ENCODE measurements at regions of chr10 and their contacts with region 1.

Region 1: GRCh38 chr10:57716886-57717285 is 550.8 kb downstream of the IPMK start:
- DNase-seq: peak; percentile 53
- H3K4me3 Mint-ChIP-seq: no peak overlapping the region
- H3K27ac Mint-ChIP-seq: no peak overlapping the region
- H3K4me1 Mint-ChIP-seq: no peaks in the 10 kb centered on the region
- H3K27me3 Mint-ChIP-seq: no peaks in the 10 kb centered on the region
- CTCF ChIP-seq: peak; percentile 42

Region 2: GRCh38 chr10:57706576-57707299 is 10.1 kb before region 1 on chr10:
- CTCF ChIA-PET with region 1: interaction called, 15 read pairs
- POLR2A ChIA-PET with region 1: interaction called, 3 read pairs
- intact Hi-C with region 1: no loop called
- DNase-seq: no peak
- H3K4me3 Mint-ChIP-seq: no peak overlapping the region
- H3K27ac Mint-ChIP-seq: no peak overlapping the region
- H3K4me1 Mint-ChIP-seq: peaks cover 9% of the 10 kb centered on the region
- H3K27me3 Mint-ChIP-seq: no peaks in the 10 kb centered on the region
- CTCF ChIP-seq: no peak

Region 3: DNA sequence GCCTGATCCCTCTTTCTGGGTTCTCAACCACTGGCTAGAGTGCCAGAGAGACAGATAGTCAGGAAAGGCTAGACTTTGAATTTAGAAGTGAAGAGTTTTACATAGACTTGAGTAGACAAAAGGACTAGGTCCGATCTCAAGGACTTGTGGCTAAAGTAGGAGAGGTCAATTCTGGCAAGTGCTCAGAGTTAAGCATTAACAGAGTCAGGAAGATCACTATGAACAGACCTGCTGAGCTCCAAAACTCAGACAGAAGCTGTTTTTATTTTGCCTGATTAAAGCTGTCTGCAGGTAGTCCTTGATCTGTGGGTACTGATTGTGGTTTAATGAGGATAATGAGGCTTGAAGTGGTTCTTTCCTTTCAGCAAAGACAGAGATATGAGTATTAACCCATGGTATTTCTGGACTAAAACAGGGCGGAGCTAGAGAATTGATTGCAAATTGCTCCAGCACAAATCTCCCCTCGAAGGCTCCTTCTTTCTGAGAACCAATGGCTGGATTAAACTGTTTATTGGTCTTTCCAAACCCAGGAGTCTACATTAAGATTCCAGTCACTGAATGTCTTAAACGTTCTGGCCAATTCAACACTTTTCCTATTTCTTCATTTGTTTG is 127.6 kb after region 1 on chr10:
- CTCF ChIA-PET with region 1: interaction called, 123 read pairs
- POLR2A ChIA-PET with region 1: interaction called, 7 read pairs
- intact Hi-C with region 1: loop called (anchors 1 kb)
- DNase-seq: no peak
- H3K4me3 Mint-ChIP-seq: no peak overlapping the region
- H3K27ac Mint-ChIP-seq: no peak overlapping the region
- H3K4me1 Mint-ChIP-seq: peaks cover 5% of the 10 kb centered on the region
- H3K27me3 Mint-ChIP-seq: no peaks in the 10 kb centered on the region
- CTCF ChIP-seq: no peak

Region 4: DNA sequence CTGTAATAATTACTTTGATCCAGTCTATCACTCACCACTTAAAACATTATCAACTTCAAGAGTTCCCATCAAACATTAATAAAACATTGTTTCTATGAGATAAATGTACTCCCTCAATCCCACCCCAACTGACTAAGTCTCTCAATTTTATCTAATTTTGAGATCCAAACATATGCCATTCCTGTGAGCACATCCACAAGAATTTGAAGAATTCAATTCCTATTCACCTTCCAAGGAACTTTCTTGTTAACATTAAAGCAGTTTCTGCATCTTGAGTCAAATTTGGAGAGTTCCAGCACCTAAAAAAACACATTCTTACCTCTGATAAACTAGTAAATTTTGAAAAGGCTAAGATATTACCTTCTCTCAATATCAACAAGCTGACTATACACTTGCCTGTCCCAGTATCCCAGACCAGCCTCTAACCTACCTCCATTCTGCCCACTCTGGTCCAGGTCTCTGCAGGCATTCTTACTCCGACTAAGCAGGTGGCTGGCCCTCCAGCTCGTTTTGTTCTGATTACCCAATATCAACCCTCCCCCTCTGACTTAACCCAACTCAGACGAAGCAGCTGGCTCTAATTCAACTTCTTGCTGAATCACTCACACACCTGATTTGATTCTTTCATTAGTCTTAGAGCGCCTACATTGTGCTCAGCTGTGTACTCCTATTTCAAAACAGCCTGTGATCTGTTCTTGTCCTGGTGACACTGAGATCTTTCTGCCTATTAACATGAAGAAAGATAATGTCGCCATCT is 275.6 kb after region 1 on chr10:
- CTCF ChIA-PET with region 1: interaction called, 10 read pairs
- POLR2A ChIA-PET with region 1: no interaction called
- intact Hi-C with region 1: no loop called
- DNase-seq: peak; percentile 92
- H3K4me3 Mint-ChIP-seq: peak overlapping the region; percentile 55
- H3K27ac Mint-ChIP-seq: peak overlapping the region; percentile 52
- H3K4me1 Mint-ChIP-seq: peaks cover 12% of the 10 kb centered on the region
- H3K27me3 Mint-ChIP-seq: no peaks in the 10 kb centered on the region
- CTCF ChIP-seq: no peak

Region 5: DNA sequence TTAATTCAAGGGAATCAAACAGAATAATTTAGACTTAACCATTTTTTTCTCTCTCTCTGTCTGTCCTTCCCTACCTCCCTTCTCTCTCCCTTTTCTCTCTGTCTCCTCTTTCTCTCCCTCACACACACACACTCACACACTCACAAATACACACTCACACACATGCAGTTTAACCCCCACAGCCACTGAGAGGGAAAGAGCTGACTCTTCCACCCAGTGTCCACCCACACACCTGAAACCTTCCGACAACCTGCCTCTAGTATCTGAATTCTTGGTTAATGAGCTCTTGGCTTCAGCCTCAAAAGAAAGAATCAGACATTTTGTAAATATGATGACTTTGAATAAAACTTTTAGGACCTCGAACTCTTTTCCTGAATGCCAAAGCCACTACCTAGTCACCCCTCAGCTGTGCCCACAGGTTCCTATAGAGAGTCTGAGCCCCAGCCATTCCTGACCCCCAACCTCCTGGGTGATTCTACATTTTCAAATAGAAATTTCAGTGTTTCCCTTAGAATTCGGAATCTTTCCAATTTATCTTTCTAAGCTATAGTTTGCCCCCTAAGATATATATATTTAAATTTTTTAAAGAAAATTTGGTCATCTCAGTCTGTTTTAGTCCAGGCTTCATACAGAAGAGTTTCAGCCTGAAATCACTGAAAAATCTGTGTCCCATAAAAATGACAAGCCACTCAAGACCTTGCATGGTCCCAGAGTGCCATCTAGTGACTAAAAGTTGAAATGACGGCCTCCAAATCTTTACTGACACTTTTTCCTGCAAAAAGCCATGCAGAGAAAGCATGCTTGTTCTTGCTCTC is 348.0 kb after region 1 on chr10:
- CTCF ChIA-PET with region 1: interaction called, 65 read pairs
- POLR2A ChIA-PET with region 1: no interaction called
- intact Hi-C with region 1: loop called (anchors 1 kb)
- DNase-seq: peak; percentile 62
- H3K4me3 Mint-ChIP-seq: no peak overlapping the region
- H3K27ac Mint-ChIP-seq: peak overlapping the region; percentile 30
- H3K4me1 Mint-ChIP-seq: peaks cover 6% of the 10 kb centered on the region
- H3K27me3 Mint-ChIP-seq: no peaks in the 10 kb centered on the region
- CTCF ChIP-seq: peak; percentile 90

Region 6: DNA sequence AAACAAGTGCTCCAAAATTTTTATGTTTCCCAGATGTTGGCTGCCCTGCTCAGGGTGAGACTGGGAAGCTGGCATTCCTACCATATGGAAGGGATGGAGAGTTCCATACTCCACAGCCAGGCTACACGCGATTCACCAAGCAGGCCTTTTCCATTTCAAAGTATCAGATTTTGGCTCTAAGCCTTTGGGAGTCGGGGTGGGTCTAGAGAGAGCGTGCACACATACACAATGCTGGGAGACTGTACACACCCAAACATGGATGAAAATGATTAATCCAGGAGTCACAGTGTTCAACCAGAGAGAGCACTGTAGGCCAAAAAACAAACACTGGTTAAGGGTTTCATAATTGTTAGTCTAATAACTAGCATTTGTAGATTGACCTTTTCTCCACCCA is 1090.7 kb after region 1 on chr10:
- CTCF ChIA-PET with region 1: no interaction called
- POLR2A ChIA-PET with region 1: no interaction called
- intact Hi-C with region 1: no loop called
- DNase-seq: peak; percentile 63
- H3K4me3 Mint-ChIP-seq: no peak overlapping the region
- H3K27ac Mint-ChIP-seq: peak overlapping the region; percentile 39
- H3K4me1 Mint-ChIP-seq: peaks cover 11% of the 10 kb centered on the region
- H3K27me3 Mint-ChIP-seq: no peaks in the 10 kb centered on the region
- CTCF ChIP-seq: no peak